ENCODE measurements at regions of chr19 and their contacts with region 1.

Region 1: DNA sequence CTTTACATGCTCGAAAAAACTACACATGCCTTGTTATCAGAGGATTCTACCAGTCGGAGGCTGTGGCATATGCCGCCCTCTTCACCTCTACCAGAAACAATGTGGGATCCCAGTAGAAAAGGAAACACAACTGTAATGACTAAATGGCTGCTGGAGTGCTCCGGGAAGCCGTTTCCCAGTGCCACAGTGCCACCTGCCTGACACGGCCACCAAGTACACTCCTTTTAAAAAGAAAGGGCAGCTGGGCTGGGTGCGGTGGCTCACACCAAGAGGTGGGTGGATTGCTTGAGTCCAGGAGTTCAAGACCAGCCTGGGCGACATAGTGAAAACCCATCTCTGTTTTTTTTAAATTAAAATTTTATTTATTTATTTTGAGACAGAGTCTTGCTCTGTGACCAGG is 67.3 kb downstream of the TRPM4 start:
- DNase-seq: peak; percentile 52 to 73 (median 57)
- ATAC-seq: peak; percentile 89
- H3K4me3 ChIP-seq: no peak overlapping the region
- H3K27ac ChIP-seq: no peak overlapping the region
- H3K4me1 ChIP-seq: peaks cover 4% of the 10 kb centered on the region in 2 experiments; a peak in 2 of 5 replicates
- H3K27me3 ChIP-seq: no peaks in the 10 kb centered on the region; a peak in 1 of 5 replicates
- CTCF ChIP-seq: peak; percentile 76 to 83 (median 77)
- EP300 ChIP-seq: no peak
- POLR2A ChIP-seq: no peak
- RAD21 ChIP-seq: peak; percentile 58 to 86

Region 2: GRCh38 chr19:48993175-48994034 is 231.5 kb before region 1 on chr19 and contains the starts of genes GYS1 and RUVBL2:
- CTCF ChIA-PET with region 1: no interaction called
- POLR2A ChIA-PET with region 1: no interaction called
- in situ Hi-C with region 1: no loop called
- intact Hi-C with region 1: loop called (anchors 10 kb)
- DNase-seq: peak; percentile 98 to 100 (median 99)
- ATAC-seq: peak; percentile 95
- H3K4me3 ChIP-seq: peak within 1 kb of the TSS; percentile 87
- H3K27ac ChIP-seq: peak within 1 kb of the TSS; percentile 91
- H3K4me1 ChIP-seq: peaks cover 5 to 30% of the 10 kb centered on the region in 2 experiments; a peak in 4 of 5 replicates
- H3K27me3 ChIP-seq: no peaks in the 10 kb centered on the region
- CTCF ChIP-seq: peak; percentile 97 to 98 (median 98)
- EP300 ChIP-seq: peak; percentile 85
- POLR2A ChIP-seq: peak; percentile 96
- RAD21 ChIP-seq: peak; percentile 36 to 46
- polyA plus RNA-seq, gene GYS1: 1.9 to 2.2 TPM
- polyA plus RNA-seq, gene RUVBL2: 71.4 to 95.3 TPM

Region 3: GRCh38 chr19:49071860-49072547 is 152.9 kb before region 1 on chr19:
- CTCF ChIA-PET with region 1: no interaction called
- POLR2A ChIA-PET with region 1: no interaction called
- in situ Hi-C with region 1: no loop called
- intact Hi-C with region 1: no loop called
- DNase-seq: peak; percentile 70 to 94 (median 87)
- ATAC-seq: peak; percentile 76
- H3K4me3 ChIP-seq: no peak overlapping the region
- H3K27ac ChIP-seq: no peak overlapping the region
- H3K4me1 ChIP-seq: peaks cover 9 to 32% of the 10 kb centered on the region in 2 experiments; a peak in 4 of 5 replicates
- H3K27me3 ChIP-seq: peaks cover 9 to 31% of the 10 kb centered on the region in 2 experiments; a peak in 4 of 5 replicates
- CTCF ChIP-seq: no peak
- EP300 ChIP-seq: no peak
- POLR2A ChIP-seq: no peak
- RAD21 ChIP-seq: no peak

Region 4: GRCh38 chr19:49301165-49301865 is 76.5 kb after region 1 on chr19:
- CTCF ChIA-PET with region 1: interaction called, 4 read pairs
- POLR2A ChIA-PET with region 1: no interaction called
- in situ Hi-C with region 1: no loop called
- intact Hi-C with region 1: loop called (anchors 10 kb)
- DNase-seq: peak; percentile 87 to 89 (median 88)
- ATAC-seq: peak; percentile 100
- H3K4me3 ChIP-seq: peak overlapping the region; percentile 30
- H3K27ac ChIP-seq: no peak overlapping the region; the same call in 2 of the 3 replicates
- H3K4me1 ChIP-seq: peaks cover 2 to 5% of the 10 kb centered on the region in 2 experiments; a peak in 1 of 5 replicates
- H3K27me3 ChIP-seq: peaks cover 3 to 4% of the 10 kb centered on the region in 2 experiments; a peak in 2 of 5 replicates
- CTCF ChIP-seq: peak; percentile 92 to 97 (median 93)
- EP300 ChIP-seq: no peak
- POLR2A ChIP-seq: 0 out of 2 replicates have a peak, but pooled peaks have one; percentile 28
- RAD21 ChIP-seq: peak in 1 of 2 experiments; percentile 70; a peak in 3 of 4 replicates

Measured in K562 (cell line).